GM12878 (cell line): ENCODE measurements at regions of chrX and their contacts with region 1.

Region 1: GRCh38 chrX:151516538-151517187 is 46.8 kb upstream of the PASD1 start:
- DNase-seq: no peak
- ATAC-seq: no peak
- H3K4me3 ChIP-seq: no peak overlapping the region
- H3K27ac ChIP-seq: no peak overlapping the region
- H3K4me1 ChIP-seq: no peaks in the 10 kb centered on the region
- H3K27me3 ChIP-seq: no peaks in the 10 kb centered on the region
- CTCF ChIP-seq: no peak
- EP300 ChIP-seq: no peak
- POLR2A ChIP-seq: no peak
- RAD21 ChIP-seq: no peak

Region 2: GRCh38 chrX:151538190-151539122 is 21.8 kb after region 1 on chrX:
- CTCF ChIA-PET with region 1: no interaction called
- POLR2A ChIA-PET with region 1: no interaction called
- RAD21 ChIA-PET with region 1: no interaction called
- SMC1A ChIA-PET with region 1: no interaction called
- in situ Hi-C with region 1: no loop called
- intact Hi-C with region 1: no loop called
- DNase-seq: no peak
- ATAC-seq: no peak
- H3K4me3 ChIP-seq: no peak overlapping the region
- H3K27ac ChIP-seq: no peak overlapping the region
- H3K4me1 ChIP-seq: no peaks in the 10 kb centered on the region
- H3K27me3 ChIP-seq: no peaks in the 10 kb centered on the region
- CTCF ChIP-seq: no peak
- EP300 ChIP-seq: no peak
- POLR2A ChIP-seq: no peak
- RAD21 ChIP-seq: no peak

Region 3: GRCh38 chrX:151570561-151570960 is 53.9 kb after region 1 on chrX:
- CTCF ChIA-PET with region 1: no interaction called
- POLR2A ChIA-PET with region 1: no interaction called
- RAD21 ChIA-PET with region 1: no interaction called
- SMC1A ChIA-PET with region 1: no interaction called
- in situ Hi-C with region 1: no loop called
- intact Hi-C with region 1: loop called (anchors 10 kb)
- DNase-seq: no peak
- ATAC-seq: no peak
- H3K4me3 ChIP-seq: no peak overlapping the region
- H3K27ac ChIP-seq: no peak overlapping the region
- H3K4me1 ChIP-seq: no peaks in the 10 kb centered on the region
- H3K27me3 ChIP-seq: no peaks in the 10 kb centered on the region
- CTCF ChIP-seq: no peak
- EP300 ChIP-seq: no peak
- POLR2A ChIP-seq: no peak
- RAD21 ChIP-seq: no peak